Tibial artery (tissue), 4 donors: ENCODE measurements at regions of chr18 and their contacts with region 1.

Region 1: DNA sequence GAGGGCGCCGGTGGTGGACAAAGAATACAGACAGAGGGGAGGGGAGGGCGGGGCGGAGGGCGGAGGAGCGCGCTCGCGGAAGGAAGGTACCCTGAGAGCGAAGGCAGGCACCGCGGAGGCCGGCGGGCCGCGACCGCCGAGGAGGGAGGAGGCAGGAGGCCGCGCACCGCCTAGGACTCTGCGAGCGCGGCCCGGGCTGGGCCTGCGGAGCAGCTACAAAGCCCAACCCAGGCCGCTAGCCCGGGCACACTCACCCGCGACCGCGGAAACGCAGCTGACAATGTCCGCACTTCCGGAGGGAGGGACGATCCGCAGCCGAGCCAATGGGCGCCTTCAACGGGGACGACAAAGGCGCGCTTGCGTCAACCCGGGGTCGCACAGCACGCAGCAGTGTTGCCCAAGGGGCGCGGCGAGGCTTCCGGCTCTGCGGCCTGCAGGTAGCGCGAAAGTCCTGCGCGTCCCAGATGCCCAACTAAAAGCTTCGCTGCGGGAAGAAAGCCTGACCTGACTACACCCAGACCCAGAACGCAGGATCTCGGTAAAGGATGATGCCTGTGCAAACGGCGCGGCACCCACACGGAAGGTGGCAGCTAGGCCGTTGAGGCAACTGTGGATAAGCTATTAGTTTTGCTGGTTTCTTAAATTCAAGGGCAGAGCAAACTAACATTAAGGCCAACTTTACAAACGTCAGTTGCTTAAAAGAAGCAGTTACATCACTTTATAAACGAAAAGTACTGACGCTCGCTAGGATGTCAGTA is at the start of gene C18orf32:
- DNase-seq: peak; percentile 93 to 97
- H3K4me3 ChIP-seq: peak within 1 kb of the TSS; percentile 73 to 88
- H3K27ac ChIP-seq: peak within 1 kb of the TSS; percentile 89 to 98
- H3K4me1 ChIP-seq: peaks cover 0 to 36% (median 18%) of the 10 kb centered on the region in 4 donors
- H3K27me3 ChIP-seq: no peaks in the 10 kb centered on the region
- CTCF ChIP-seq: no peak

Region 2: DNA sequence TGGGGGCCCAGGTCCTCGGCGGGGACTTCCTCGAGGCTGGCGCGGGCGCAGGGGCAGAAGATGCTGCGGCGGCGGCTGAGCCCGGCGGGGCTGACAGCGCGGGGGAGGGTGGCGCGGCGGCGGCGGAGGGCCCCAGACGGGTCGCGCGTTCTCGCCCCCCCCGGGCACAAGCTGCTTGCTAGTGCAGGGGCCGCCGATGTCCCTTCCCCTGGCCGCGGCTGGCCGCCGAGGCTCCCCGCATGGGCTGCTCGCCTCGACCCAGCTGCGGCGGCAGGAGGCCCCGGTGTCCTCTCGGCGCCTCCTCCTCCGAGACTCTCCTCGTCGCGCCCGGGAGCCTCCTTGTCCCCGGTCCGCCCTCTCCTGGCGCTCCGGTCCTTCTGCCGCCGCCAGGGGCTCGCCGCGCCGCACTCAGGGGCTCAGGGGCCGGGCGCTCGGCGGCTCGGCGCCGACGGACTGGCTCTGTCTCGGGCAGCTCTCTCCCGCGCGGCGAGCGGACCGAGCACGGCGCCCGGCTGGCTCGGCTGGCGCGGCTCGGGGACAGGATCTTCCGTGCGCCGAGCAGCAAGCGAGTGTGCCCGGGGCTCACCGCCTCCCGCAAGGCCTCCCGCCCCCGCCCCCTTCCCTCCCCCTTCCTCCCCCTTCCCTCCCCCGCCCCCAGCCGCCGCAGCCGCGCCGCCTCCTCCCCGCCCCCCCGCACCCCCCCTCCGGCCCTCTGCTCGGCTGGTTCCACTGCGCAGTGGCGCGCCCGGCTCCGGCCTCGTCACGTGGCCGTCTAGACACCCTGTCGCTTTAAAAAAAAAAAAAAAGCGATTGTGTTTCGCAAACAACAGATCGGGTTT is 535.5 kb before region 1 on chr18:
- intact Hi-C with region 1: loop called (anchors 5 kb)
- DNase-seq: peak; percentile 88 to 95
- H3K4me3 ChIP-seq: peak overlapping the region; percentile 58 to 98
- H3K27ac ChIP-seq: peak overlapping the region; percentile 88 to 99
- H3K4me1 ChIP-seq: peaks cover 0 to 44% (median 35%) of the 10 kb centered on the region in 4 donors
- H3K27me3 ChIP-seq: no peaks in the 10 kb centered on the region
- CTCF ChIP-seq: peak in 1 of 2 experiments; percentile 30

Region 3: DNA sequence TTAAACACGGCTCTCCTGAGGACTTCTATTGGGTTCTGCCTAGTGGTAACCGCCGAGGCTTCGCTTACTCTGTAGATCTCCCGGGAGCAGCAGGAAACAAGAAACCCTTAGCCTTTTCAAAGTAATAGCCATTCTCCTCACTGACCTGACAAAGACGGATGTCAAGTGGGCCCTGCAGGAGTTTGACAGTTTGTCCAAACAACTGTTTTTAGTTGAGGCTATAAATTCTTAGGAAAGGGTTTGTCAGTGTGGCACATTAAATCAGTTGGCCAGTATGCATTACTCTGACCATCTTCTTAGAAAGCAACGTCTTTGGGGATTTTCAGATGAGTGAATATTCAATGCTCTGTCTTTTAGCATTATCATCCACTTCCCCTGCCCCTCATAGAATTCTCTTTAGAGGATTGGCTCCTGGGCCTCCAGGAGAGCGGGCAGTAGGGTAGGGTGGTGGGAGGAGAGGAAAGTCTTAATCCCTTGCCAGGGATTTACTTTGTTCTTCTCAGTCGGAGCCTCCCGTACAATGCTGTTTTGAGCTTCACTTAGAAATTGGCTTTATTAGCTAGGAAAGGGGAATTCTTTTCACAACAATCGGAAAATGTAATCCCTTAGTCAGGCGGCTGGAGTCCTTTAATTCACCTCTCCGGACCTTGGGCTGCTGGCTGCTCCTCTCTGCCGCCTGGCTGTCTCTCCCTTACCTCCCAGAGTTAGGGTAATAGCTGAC is 13.2 kb after region 1 on chr18:
- intact Hi-C with region 1: no loop called
- DNase-seq: no peak
- H3K4me3 ChIP-seq: no peak overlapping the region
- H3K27ac ChIP-seq: no peak overlapping the region
- H3K4me1 ChIP-seq: no peaks in the 10 kb centered on the region
- H3K27me3 ChIP-seq: peaks cover 0 to 27% of the 10 kb centered on the region in 2 donors
- CTCF ChIP-seq: no peak

Region 4: GRCh38 chr18:49813319-49814146 is 326.4 kb after region 1 on chr18 and contains the start of gene ACAA2:
- intact Hi-C with region 1: loop called (anchors 10 kb)
- DNase-seq: peak; percentile 78 to 93
- H3K4me3 ChIP-seq: peak within 1 kb of the TSS; percentile 71 to 76
- H3K27ac ChIP-seq: peak within 1 kb of the TSS; percentile 93 to 97
- H3K4me1 ChIP-seq: peaks cover 0 to 14% (median 5%) of the 10 kb centered on the region in 4 donors
- H3K27me3 ChIP-seq: no peaks in the 10 kb centered on the region
- CTCF ChIP-seq: no peak

Region 5: GRCh38 chr18:50287441-50288347 is 800.6 kb after region 1 on chr18 and contains the start of gene CXXC1:
- intact Hi-C with region 1: loop called (anchors 5 kb)
- DNase-seq: peak; percentile 97 to 98
- H3K4me3 ChIP-seq: peak within 1 kb of the TSS; percentile 70 to 91
- H3K27ac ChIP-seq: peak within 1 kb of the TSS; percentile 90 to 91
- H3K4me1 ChIP-seq: peaks cover 0 to 9% (median 7%) of the 10 kb centered on the region in 4 donors
- H3K27me3 ChIP-seq: peaks cover 0 to 7% of the 10 kb centered on the region in 2 donors
- CTCF ChIP-seq: peak; percentile 44 to 63

Region 6: GRCh38 chr18:50374753-50375391 is 887.7 kb after region 1 on chr18 and contains the start of gene SKA1:
- intact Hi-C with region 1: loop called (anchors 10 kb)
- DNase-seq: peak; percentile 85 to 94
- H3K4me3 ChIP-seq: peak within 1 kb of the TSS; percentile 45 to 59
- H3K27ac ChIP-seq: peak within 1 kb of the TSS; percentile 56 to 77
- H3K4me1 ChIP-seq: peaks cover 0 to 12% (median 7%) of the 10 kb centered on the region in 4 donors
- H3K27me3 ChIP-seq: no peaks in the 10 kb centered on the region
- CTCF ChIP-seq: no peak